ENCODE measurements at regions of chr1 and their contacts with region 1.

Region 1: GRCh38 chr1:15736038-15736889 is at the start of gene SLC25A34:
- DNase-seq: no peak
- H3K4me3 ChIP-seq: no peak within 1 kb of the TSS
- H3K27ac ChIP-seq: no peak within 1 kb of the TSS
- H3K4me1 ChIP-seq: peaks cover 9% of the 10 kb centered on the region
- H3K27me3 ChIP-seq: no peaks in the 10 kb centered on the region
- CTCF ChIP-seq: no peak
- total RNA-seq, gene SLC25A34: 0.67 to 0.89 TPM

Region 2: DNA sequence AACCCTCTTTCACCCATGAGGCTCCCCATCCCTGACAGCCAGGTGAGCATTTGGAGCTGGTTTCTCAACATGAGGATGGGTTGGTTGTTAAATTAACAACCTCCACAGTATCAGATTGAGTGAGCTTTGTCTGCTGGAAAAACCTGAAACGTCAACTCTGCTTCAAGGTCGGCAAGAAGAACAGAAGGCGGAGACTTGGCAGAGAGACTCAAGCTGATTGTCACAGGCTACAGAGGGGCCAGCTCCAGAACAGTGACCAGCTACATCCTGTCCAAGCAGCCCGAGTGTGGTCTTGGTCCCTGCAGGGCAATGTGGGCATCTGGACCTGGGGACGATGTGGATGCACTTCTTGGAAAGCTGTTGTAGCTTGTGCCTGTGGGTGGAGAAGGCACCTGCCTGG is 619.3 kb before region 1 on chr1:
- CTCF ChIA-PET with region 1: no interaction called
- dilution Hi-C with region 1: no loop called
- in situ Hi-C with region 1: no loop called
- intact Hi-C with region 1: no loop called
- DNase-seq: no peak
- H3K4me3 ChIP-seq: no peak overlapping the region
- H3K27ac ChIP-seq: no peak overlapping the region
- H3K4me1 ChIP-seq: no peaks in the 10 kb centered on the region
- H3K27me3 ChIP-seq: no peaks in the 10 kb centered on the region
- CTCF ChIP-seq: no peak

Region 3: DNA sequence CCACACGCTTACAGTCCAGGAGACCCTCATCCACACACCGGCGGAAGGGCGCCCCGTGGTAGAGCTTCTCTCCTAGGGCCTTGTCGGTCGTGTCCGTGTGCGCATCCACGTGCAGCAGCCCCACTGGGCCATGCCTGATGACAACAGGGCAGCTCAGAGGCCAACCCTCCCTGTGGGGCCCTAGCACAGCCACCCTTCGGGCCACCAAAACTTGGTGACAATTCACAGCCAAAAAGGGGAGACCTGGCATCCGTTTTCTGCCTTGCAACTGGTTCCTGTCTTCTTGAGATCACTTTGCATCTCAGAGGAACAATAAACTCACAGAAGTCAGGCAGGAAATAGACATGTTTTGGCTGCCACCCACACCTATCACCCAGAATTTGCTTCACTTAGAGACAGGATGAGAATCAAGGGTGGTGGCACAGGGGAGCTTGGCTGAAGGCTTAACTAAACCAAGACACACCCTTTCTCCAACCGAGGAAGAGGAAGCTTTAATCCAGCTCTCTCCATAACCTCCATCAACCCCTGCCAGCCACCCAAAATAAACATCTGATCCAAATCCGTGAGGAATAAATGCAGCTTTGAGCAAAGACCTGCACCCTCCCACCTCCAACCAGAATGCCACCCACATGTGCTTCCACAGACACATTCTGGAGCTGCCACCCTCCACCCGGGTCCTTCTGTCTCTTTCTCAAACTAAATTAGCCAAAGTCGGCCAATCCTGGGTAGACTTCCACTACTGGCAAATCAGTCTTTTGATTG is 157.2 kb before region 1 on chr1:
- CTCF ChIA-PET with region 1: no interaction called
- dilution Hi-C with region 1: loop called (anchors 5 kb)
- in situ Hi-C with region 1: no loop called
- intact Hi-C with region 1: no loop called
- DNase-seq: no peak
- H3K4me3 ChIP-seq: no peak overlapping the region
- H3K27ac ChIP-seq: no peak overlapping the region
- H3K4me1 ChIP-seq: peaks cover 5% of the 10 kb centered on the region
- H3K27me3 ChIP-seq: no peaks in the 10 kb centered on the region
- CTCF ChIP-seq: no peak

Region 4: DNA sequence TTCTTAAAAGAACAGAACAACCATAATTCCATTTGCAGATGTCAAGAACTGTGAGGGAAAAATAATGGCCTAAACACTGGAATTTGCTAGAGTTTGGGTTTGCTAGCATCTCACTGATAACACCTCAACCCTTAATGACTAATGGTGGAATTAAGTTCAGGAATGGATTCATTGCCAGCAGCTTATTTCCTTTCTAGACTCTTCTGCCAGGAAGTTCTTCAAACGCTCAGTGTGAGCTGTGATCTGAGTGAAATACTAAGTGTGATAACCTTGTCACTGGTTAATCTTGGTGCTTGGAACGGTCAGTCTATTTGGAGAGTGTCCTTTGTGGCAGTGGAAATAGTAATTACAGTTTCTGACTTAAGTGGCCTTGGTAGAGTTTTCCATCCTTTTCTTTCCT is 73.8 kb before region 1 on chr1:
- CTCF ChIA-PET with region 1: no interaction called
- dilution Hi-C with region 1: loop called (anchors 5 kb)
- in situ Hi-C with region 1: no loop called
- intact Hi-C with region 1: no loop called
- DNase-seq: no peak
- H3K4me3 ChIP-seq: no peak overlapping the region
- H3K27ac ChIP-seq: no peak overlapping the region
- H3K4me1 ChIP-seq: no peaks in the 10 kb centered on the region
- H3K27me3 ChIP-seq: no peaks in the 10 kb centered on the region
- CTCF ChIP-seq: no peak